Activated CD4-positive, alpha-beta memory T cell treated with anti-CD3 and anti-CD28 coated beads, Interleukin-2, amount 10 ng/mL, durations not matched to agents 7 days and 5 days (primary cell): ENCODE measurements at regions of chr5 and their contacts with region 1.

Region 1: GRCh38 chr5:134225618-134226440 is at the start of gene PPP2CA:
- DNase-seq: peak; percentile 99
- H3K4me3 Mint-ChIP-seq: peak within 1 kb of the TSS; percentile 95
- H3K27ac Mint-ChIP-seq: peak within 1 kb of the TSS; percentile 98
- H3K4me1 Mint-ChIP-seq: peaks cover 45% of the 10 kb centered on the region
- H3K27me3 Mint-ChIP-seq: no peaks in the 10 kb centered on the region
- total RNA-seq, gene PPP2CA: 146 to 156 TPM

Region 2: DNA sequence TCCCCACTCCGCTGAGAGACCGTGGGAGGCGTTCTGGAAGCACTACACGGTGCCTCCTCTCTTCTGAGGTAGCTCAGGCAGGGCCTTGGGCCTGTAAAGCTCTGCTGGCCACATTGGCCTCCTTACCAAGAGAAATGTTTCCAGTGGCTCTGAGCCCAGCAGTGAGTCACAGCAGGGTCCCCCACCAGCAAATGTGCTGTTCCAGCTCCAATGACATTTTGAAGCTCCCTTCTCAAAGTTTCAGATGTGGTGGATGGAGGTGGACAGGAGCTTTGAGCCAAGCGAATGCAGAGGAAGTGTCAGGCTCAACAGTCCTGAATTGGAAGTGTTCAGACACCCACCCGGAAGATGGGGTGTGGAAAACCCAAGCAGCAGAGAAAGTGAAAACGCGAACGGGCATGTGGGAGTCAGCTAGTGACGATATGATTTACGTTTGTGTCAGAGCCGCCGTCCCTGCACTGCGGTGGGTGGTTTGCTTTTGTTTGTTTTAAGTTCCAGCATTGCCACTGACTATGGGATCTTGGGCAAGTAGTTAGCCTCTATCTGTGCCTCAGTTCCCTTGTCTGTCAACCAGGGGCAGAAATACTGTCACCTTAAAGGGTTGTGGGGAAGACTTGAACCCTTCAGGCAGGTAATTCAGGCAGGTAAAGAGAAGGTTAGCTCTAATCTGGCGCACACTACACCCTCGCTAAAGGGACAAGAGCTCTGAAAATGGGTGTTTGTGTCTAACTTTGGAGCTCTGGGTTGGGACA is 295.6 kb before region 1 on chr5:
- CTCF ChIA-PET with region 1: no interaction called
- POLR2A ChIA-PET with region 1: no interaction called
- DNase-seq: peak; percentile 61
- H3K4me3 Mint-ChIP-seq: peak overlapping the region; percentile 43
- H3K27ac Mint-ChIP-seq: peak overlapping the region; percentile 60
- H3K4me1 Mint-ChIP-seq: peaks cover 24% of the 10 kb centered on the region
- H3K27me3 Mint-ChIP-seq: no peaks in the 10 kb centered on the region

Region 3: GRCh38 chr5:134176511-134177368 is 49.1 kb before region 1 on chr5 and contains the start of gene SKP1:
- CTCF ChIA-PET with region 1: interaction called, 16 read pairs
- POLR2A ChIA-PET with region 1: interaction called, 118 read pairs
- DNase-seq: peak; percentile 87
- H3K4me3 Mint-ChIP-seq: peak within 1 kb of the TSS; percentile 80
- H3K27ac Mint-ChIP-seq: peak within 1 kb of the TSS; percentile 97
- H3K4me1 Mint-ChIP-seq: peaks cover 30% of the 10 kb centered on the region
- H3K27me3 Mint-ChIP-seq: peaks cover 6% of the 10 kb centered on the region
- total RNA-seq, gene SKP1: 197 to 205 TPM

Region 4: GRCh38 chr5:134236318-134236717 is 10.5 kb after region 1 on chr5:
- CTCF ChIA-PET with region 1: interaction called, 5 read pairs
- POLR2A ChIA-PET with region 1: interaction called, 25 read pairs
- DNase-seq: no peak
- H3K4me3 Mint-ChIP-seq: no peak overlapping the region
- H3K27ac Mint-ChIP-seq: no peak overlapping the region
- H3K4me1 Mint-ChIP-seq: no peaks in the 10 kb centered on the region
- H3K27me3 Mint-ChIP-seq: peaks cover 18% of the 10 kb centered on the region

Region 5: DNA sequence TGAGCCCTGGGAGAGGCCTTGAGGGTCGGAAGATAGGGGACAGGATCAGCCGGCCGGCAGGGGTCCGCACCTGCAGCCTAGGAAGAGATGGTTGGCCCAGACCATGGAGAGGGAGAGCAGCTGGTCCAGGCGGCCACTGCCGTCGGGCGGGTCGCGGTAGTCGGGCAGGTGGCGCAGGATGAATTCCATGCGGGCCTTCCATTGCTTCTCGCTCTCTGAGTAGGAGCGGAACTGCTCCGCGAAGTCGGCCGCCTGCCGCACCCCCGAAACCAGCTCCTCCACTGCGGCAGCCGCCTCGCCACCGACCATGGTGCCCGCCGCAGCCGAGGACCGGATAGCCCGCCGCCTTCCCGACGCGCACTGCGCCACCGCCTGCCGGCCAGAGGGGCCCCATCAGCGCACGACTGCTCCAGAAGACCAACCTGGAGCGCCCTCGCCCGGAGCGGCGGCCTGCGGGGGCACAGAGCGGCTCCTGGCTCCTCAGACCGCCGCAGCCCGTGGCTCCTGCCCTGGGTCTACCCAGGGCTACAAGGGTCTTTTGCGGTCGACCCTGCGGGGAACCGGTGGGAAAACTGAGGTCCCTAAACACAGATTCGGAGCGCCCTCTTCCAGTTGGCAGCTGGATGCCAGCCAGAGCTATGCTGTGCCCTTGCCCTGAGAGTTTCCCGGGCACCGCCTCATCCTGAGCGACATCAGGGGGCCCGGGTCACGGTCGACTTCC is 185.9 kb after region 1 on chr5 and contains the start of gene CDKN2AIPNL:
- CTCF ChIA-PET with region 1: interaction called, 10 read pairs
- POLR2A ChIA-PET with region 1: interaction called, 11 read pairs
- DNase-seq: peak; percentile 91
- H3K4me3 Mint-ChIP-seq: peak within 1 kb of the TSS; percentile 96
- H3K27ac Mint-ChIP-seq: peak within 1 kb of the TSS; percentile 84
- H3K4me1 Mint-ChIP-seq: peaks cover 36% of the 10 kb centered on the region
- H3K27me3 Mint-ChIP-seq: no peaks in the 10 kb centered on the region
- total RNA-seq, gene CDKN2AIPNL: 23.4 to 23.5 TPM

Region 6: DNA sequence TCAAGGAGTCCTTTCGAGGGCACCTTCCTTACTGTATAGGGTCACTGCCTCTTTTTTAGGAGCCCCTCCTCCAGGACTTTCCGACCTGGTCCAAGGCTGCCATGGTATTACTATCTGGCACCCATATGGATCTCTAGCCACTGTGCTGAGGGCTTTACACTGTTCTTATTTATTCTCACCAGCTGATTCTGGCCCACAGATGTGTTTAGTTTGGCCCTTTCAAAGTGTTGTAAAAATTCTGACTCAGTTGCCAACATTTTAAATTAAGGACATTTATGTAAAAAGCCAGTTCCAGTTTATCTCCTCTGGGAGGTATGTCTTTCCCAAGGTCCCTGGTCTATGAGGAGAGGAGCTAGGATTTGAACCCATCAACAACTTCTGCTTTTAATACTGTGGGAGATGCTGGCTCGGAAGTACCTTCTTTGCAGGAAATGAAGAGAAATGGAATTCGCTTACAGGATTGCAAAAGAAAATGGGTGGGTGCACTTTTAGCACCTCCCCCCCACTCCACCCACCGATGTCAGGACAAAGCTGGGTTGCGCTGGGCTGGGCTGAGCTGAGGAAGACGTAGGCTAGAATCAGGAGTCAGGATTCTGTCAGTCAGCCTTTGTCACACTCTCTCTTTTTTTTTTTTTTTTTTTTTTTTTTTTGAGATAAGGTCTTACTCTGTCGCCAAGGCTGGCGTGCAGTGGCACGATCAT is 307.4 kb after region 1 on chr5:
- CTCF ChIA-PET with region 1: no interaction called
- POLR2A ChIA-PET with region 1: no interaction called
- DNase-seq: no peak
- H3K4me3 Mint-ChIP-seq: no peak overlapping the region
- H3K27ac Mint-ChIP-seq: no peak overlapping the region
- H3K4me1 Mint-ChIP-seq: peaks cover 60% of the 10 kb centered on the region
- H3K27me3 Mint-ChIP-seq: no peaks in the 10 kb centered on the region

Region 7: DNA sequence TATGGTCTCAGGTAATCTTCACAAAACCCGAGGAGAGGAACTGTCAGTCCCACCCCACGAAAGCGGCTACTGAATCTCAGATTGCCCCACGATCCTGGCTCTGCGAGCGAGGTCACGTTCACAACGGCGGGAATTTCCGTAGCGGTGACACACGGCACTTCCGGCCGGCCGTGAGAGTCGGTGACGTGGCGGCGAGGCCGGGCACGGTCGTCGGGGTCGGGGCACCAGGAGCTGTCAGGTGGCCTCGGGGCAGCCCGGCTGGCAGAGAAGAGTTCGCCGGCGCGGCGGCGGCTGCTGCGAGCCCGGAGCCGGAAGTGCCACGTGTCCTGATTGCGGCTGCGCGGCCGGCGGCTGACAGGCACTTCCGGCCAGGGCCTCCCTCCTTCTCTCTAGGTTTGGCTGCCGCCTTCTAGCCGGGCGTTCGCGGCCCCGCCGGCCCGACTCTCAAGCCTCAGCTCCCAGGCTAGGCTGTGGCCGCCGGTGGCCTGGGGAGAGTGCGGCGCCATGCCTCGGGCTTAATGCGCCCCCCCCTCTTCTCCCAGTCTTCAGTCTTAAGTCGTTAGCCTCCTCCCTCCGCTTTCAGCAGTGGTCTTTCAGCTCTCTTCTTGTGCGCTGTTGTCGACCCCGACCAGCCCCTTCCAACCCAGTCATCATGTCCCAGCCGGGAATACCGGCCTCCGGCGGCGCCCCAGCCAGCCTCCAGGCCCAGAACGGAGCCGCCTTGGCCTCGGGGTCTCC is 422.8 kb after region 1 on chr5 and contains the start of gene SEC24A:
- CTCF ChIA-PET with region 1: no interaction called
- POLR2A ChIA-PET with region 1: interaction called, 12 read pairs
- DNase-seq: peak; percentile 92
- H3K4me3 Mint-ChIP-seq: peak within 1 kb of the TSS; percentile 86
- H3K27ac Mint-ChIP-seq: peak within 1 kb of the TSS; percentile 94
- H3K4me1 Mint-ChIP-seq: peaks cover 28% of the 10 kb centered on the region
- H3K27me3 Mint-ChIP-seq: no peaks in the 10 kb centered on the region
- total RNA-seq, gene SEC24A: 29.3 to 29.6 TPM

Region 8: GRCh38 chr5:134904630-134905245 is 678.9 kb after region 1 on chr5 and contains the start of gene PCBD2:
- CTCF ChIA-PET with region 1: no interaction called
- POLR2A ChIA-PET with region 1: interaction called, 18 read pairs
- DNase-seq: peak; percentile 94
- H3K4me3 Mint-ChIP-seq: peak within 1 kb of the TSS; percentile 95
- H3K27ac Mint-ChIP-seq: peak within 1 kb of the TSS; percentile 98
- H3K4me1 Mint-ChIP-seq: peaks cover 29% of the 10 kb centered on the region
- H3K27me3 Mint-ChIP-seq: no peaks in the 10 kb centered on the region
- total RNA-seq, gene PCBD2: 13.6 to 14.7 TPM